ENCODE measurements at regions of chr9 and their contacts with region 1.

Region 1: DNA sequence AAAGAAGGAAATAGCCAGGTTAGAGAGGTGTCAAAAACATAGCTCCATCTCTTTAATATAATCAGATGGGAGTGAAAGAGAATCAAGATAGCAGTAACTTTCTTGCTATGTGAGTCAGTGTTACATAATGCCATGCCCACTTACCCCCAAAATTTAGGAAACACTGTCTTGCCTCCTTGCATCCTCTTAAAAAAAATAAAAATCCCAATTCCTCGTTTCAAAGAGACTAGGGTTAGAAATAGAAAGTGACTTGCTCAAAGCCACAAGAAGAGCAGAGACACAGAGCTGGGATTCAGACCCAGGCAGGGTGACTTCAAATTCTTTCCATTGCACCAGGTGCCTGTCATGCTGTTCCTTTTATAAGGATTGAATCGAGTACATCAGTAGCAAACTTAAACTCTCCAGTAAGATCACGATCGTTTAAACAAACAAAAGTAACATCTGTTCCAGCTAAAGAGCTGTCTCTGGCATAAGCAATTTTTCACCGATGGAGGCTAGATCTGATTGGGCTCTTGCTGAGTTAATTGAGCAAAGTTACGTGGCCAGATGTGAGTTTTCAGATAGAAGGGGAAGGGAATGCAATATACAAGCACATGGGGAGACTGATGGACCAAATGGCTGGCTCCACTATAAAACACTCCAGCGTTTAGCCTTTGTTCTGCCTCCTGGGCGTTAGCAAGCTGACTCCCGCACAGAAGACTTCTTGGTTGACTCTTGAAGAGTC is 176.9 kb downstream of the PALM2AKAP2 start:
- DNase-seq: no peak
- H3K4me3 ChIP-seq: no peak overlapping the region
- H3K27ac ChIP-seq: no peak overlapping the region
- H3K4me1 ChIP-seq: no peaks in the 10 kb centered on the region
- H3K27me3 ChIP-seq: no peaks in the 10 kb centered on the region
- CTCF ChIP-seq: no peak
- POLR2A ChIP-seq: no peak

Region 2: GRCh38 chr9:109945573-109945972 is 11.3 kb before region 1 on chr9:
- CTCF ChIA-PET with region 1: interaction called, 12 read pairs
- POLR2A ChIA-PET with region 1: no interaction called
- dilution Hi-C with region 1: no loop called
- intact Hi-C with region 1: no loop called
- DNase-seq: no peak
- H3K4me3 ChIP-seq: no peak overlapping the region
- H3K27ac ChIP-seq: no peak overlapping the region
- H3K4me1 ChIP-seq: no peaks in the 10 kb centered on the region
- H3K27me3 ChIP-seq: no peaks in the 10 kb centered on the region
- CTCF ChIP-seq: no peak
- POLR2A ChIP-seq: no peak